Gastrocnemius medialis (tissue), 4 donors: ENCODE measurements at regions of chr5 and their contacts with region 1.

Region 1: GRCh38 chr5:173057062-173057924 is 1.1 kb downstream of the CREBRF start:
- DNase-seq: peak; percentile 99
- ATAC-seq: peak; percentile 88 to 91
- H3K4me3 ChIP-seq: peak overlapping the region; percentile 85 to 96 (median 92)
- H3K27ac ChIP-seq: peak overlapping the region; percentile 98 to 99 (median 99)
- H3K4me1 ChIP-seq: peaks cover 18 to 31% of the 10 kb centered on the region in 2 donors
- H3K27me3 ChIP-seq: no peaks in the 10 kb centered on the region
- CTCF ChIP-seq: peak in 1 of 5 experiments; percentile 24
- POLR2A ChIP-seq: peak; percentile 32 to 78

Region 2: DNA sequence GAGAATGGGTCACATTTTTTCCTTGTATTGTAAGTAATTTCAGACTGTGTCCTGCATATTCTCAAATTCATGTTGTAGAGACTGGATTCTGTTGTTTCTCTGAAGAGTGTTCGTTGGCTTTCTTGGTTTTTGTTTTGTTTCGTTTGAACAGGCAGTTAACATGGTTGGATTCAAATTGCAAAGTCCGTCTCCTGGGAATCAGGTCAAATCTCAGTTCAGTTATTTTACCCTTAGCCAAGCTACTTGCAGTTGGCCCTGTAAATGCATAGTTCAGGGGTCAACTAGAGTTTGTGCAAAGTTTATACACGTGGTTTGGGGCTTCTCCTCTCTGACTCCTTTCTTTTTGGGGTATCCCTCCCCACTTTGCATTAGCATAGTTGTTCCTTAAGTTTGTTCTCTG is 1029.1 kb before region 1 on chr5:
- in situ Hi-C with region 1: no loop called
- intact Hi-C with region 1: no loop called
- DNase-seq: no peak
- ATAC-seq: no peak
- H3K4me3 ChIP-seq: no peak overlapping the region
- H3K27ac ChIP-seq: no peak overlapping the region
- H3K4me1 ChIP-seq: no peaks in the 10 kb centered on the region
- H3K27me3 ChIP-seq: no peaks in the 10 kb centered on the region
- CTCF ChIP-seq: no peak
- POLR2A ChIP-seq: no peak

Region 3: GRCh38 chr5:172511952-172512351 is 545.3 kb before region 1 on chr5:
- in situ Hi-C with region 1: no loop called
- intact Hi-C with region 1: no loop called
- DNase-seq: no peak
- ATAC-seq: no peak
- H3K4me3 ChIP-seq: no peak overlapping the region
- H3K27ac ChIP-seq: no peak overlapping the region
- H3K4me1 ChIP-seq: peaks cover 0 to 3% of the 10 kb centered on the region in 2 donors
- H3K27me3 ChIP-seq: no peaks in the 10 kb centered on the region
- CTCF ChIP-seq: no peak
- POLR2A ChIP-seq: no peak

Region 4: GRCh38 chr5:172868924-172869591 is 188.2 kb before region 1 on chr5:
- in situ Hi-C with region 1: no loop called
- intact Hi-C with region 1: loop called (anchors 10 kb)
- DNase-seq: peak; percentile 94 to 97
- ATAC-seq: peak; percentile 65 to 67
- H3K4me3 ChIP-seq: peak overlapping the region in 3 of 4 donors; percentile 6 to 23 (median 18)
- H3K27ac ChIP-seq: peak overlapping the region; percentile 85 to 98 (median 94)
- H3K4me1 ChIP-seq: peaks cover 93 to 95% of the 10 kb centered on the region in 2 donors
- H3K27me3 ChIP-seq: no peaks in the 10 kb centered on the region
- CTCF ChIP-seq: peak in 4 of 5 experiments; percentile 41 to 52 (median 45)
- POLR2A ChIP-seq: peak; percentile 9 to 68

Region 5: GRCh38 chr5:172999372-172999973 is 57.8 kb before region 1 on chr5:
- in situ Hi-C with region 1: loop called in 1 of 4 experiments (anchors 10 kb)
- intact Hi-C with region 1: no loop called
- DNase-seq: no peak
- ATAC-seq: peak; percentile 46 to 66
- H3K4me3 ChIP-seq: no peak overlapping the region
- H3K27ac ChIP-seq: peak overlapping the region in 3 of 4 donors; percentile 27 to 49 (median 42)
- H3K4me1 ChIP-seq: peaks cover 27% of the 10 kb centered on the region in 2 donors
- H3K27me3 ChIP-seq: no peaks in the 10 kb centered on the region
- CTCF ChIP-seq: no peak
- POLR2A ChIP-seq: no peak

Region 6: GRCh38 chr5:173010547-173011464 is 46.5 kb before region 1 on chr5:
- in situ Hi-C with region 1: no loop called
- intact Hi-C with region 1: loop called (anchors 2 kb)
- DNase-seq: peak; percentile 64 to 72
- ATAC-seq: peak; percentile 80 to 86
- H3K4me3 ChIP-seq: no peak overlapping the region
- H3K27ac ChIP-seq: peak overlapping the region; percentile 52 to 79 (median 68)
- H3K4me1 ChIP-seq: peaks cover 30 to 42% of the 10 kb centered on the region in 2 donors
- H3K27me3 ChIP-seq: no peaks in the 10 kb centered on the region
- CTCF ChIP-seq: peak in 4 of 5 experiments; percentile 33 to 66 (median 52)
- POLR2A ChIP-seq: no peak

Region 7: GRCh38 chr5:173144200-173145176 is 87.2 kb after region 1 on chr5 and contains the start of gene BNIP1:
- in situ Hi-C with region 1: no loop called
- intact Hi-C with region 1: loop called (anchors 1 kb)
- DNase-seq: peak; percentile 77 to 91
- ATAC-seq: peak; percentile 89 to 93
- H3K4me3 ChIP-seq: peak within 1 kb of the TSS; percentile 73 to 98 (median 84)
- H3K27ac ChIP-seq: peak within 1 kb of the TSS; percentile 83 to 91 (median 86)
- H3K4me1 ChIP-seq: peaks cover 3 to 11% of the 10 kb centered on the region in 2 donors
- H3K27me3 ChIP-seq: no peaks in the 10 kb centered on the region
- CTCF ChIP-seq: peak; percentile 86 to 92 (median 87)
- POLR2A ChIP-seq: peak; percentile 33 to 51
- total RNA-seq, gene BNIP1: 9.2 to 21.6 (median 17.1) TPM

Region 8: DNA sequence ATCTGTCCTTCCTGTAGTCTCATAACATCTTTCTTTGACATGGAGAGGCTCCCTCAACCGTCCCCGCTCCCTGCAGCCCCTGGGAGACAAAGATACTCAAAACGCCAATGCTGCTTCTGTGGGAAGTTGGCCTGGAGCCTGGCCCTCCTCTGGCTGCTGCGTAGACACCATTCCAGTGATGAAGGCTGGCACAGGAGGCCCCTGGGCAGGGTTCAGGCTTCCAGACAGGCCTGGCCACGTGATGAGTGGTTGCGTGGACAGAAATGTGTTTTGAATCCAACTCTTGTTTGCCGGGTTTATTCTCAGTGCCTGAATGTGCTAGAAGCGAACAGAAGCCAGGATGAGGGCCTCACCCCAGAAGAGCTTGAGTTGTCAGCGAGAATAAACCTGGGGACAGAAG is 220.9 kb after region 1 on chr5:
- in situ Hi-C with region 1: no loop called
- intact Hi-C with region 1: no loop called
- DNase-seq: no peak
- ATAC-seq: no peak
- H3K4me3 ChIP-seq: no peak overlapping the region
- H3K27ac ChIP-seq: no peak overlapping the region
- H3K4me1 ChIP-seq: no peaks in the 10 kb centered on the region
- H3K27me3 ChIP-seq: peaks cover 0 to 6% (median 5%) of the 10 kb centered on the region in 3 donors
- CTCF ChIP-seq: no peak
- POLR2A ChIP-seq: no peak

Region 9: GRCh38 chr5:174801806-174802205 is 1744.5 kb after region 1 on chr5:
- in situ Hi-C with region 1: no loop called
- intact Hi-C with region 1: no loop called
- DNase-seq: no peak
- ATAC-seq: no peak
- H3K4me3 ChIP-seq: no peak overlapping the region
- H3K27ac ChIP-seq: no peak overlapping the region
- H3K4me1 ChIP-seq: no peaks in the 10 kb centered on the region
- H3K27me3 ChIP-seq: peaks cover 0 to 13% (median 10%) of the 10 kb centered on the region in 3 donors
- CTCF ChIP-seq: no peak
- POLR2A ChIP-seq: no peak